Psoas muscle (tissue), 8 donors: ENCODE measurements at regions of chr6 and their contacts with region 1.

Region 1: DNA sequence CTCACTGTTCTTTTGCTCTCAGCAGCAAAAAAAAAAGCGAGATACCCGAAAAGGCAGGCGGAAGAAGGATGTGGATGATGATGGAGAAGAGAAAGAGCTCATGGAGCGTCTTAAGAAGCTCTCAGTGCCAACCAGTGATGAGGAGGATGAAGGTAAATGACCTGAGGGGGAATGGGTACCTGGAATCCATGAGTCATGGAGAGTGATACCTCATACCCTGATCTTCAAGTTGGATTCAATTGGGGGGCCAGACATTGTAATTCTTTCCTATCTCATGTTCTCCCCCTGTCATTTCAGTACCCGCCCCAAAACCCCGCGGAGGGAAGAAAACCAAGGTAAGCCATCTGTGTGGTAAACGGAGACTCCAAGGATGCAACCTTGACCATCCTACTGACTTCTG is 6.8 kb downstream of the ABCF1 start:
- DNase-seq: no peak
- ATAC-seq: no peak
- H3K4me3 ChIP-seq: no peak overlapping the region
- H3K27ac ChIP-seq: no peak overlapping the region
- H3K4me1 ChIP-seq: peaks cover 9% of the 10 kb centered on the region
- H3K27me3 ChIP-seq: no peaks in the 10 kb centered on the region
- CTCF ChIP-seq: no peak

Region 2: GRCh38 chr6:30616811-30617564 is 38.9 kb after region 1 on chr6 and contains the start of gene PPP1R10:
- intact Hi-C with region 1: loop called in 1 of 2 experiments (anchors 5 kb)
- DNase-seq: peak; percentile 98 to 99
- ATAC-seq: peak; percentile 83 to 88 (median 86)
- H3K4me3 ChIP-seq: peak within 1 kb of the TSS; percentile 84
- H3K27ac ChIP-seq: peak within 1 kb of the TSS; percentile 99
- H3K4me1 ChIP-seq: peaks cover 35% of the 10 kb centered on the region
- H3K27me3 ChIP-seq: no peaks in the 10 kb centered on the region
- CTCF ChIP-seq: no peak
- total RNA-seq, gene PPP1R10: 27.1 to 42.5 (median 31.6) TPM